ENCODE measurements at regions of chr6 and their contacts with region 1.

Region 1: GRCh38 chr6:90865513-90865912 is 278.6 kb upstream of the MAP3K7 start:
- DNase-seq: no peak
- ATAC-seq: no peak
- H3K4me3 ChIP-seq: no peak overlapping the region
- H3K27ac ChIP-seq: no peak overlapping the region
- H3K4me1 ChIP-seq: no peaks in the 10 kb centered on the region
- H3K27me3 ChIP-seq: no peaks in the 10 kb centered on the region
- CTCF ChIP-seq: no peak

Region 2: GRCh38 chr6:90583179-90583835 is 282.2 kb before region 1 on chr6:
- CTCF ChIA-PET with region 1: interaction called, 11 read pairs
- POLR2A ChIA-PET with region 1: no interaction called
- in situ Hi-C with region 1: no loop called
- intact Hi-C with region 1: no loop called
- DNase-seq: no peak
- ATAC-seq: no peak
- H3K4me3 ChIP-seq: no peak overlapping the region
- H3K27ac ChIP-seq: no peak overlapping the region
- H3K4me1 ChIP-seq: peaks cover 15% of the 10 kb centered on the region
- H3K27me3 ChIP-seq: no peaks in the 10 kb centered on the region
- CTCF ChIP-seq: no peak

Measured in Panc1 (cell line).